SK-N-SH (cell line): ENCODE measurements at regions of chr20 and their contacts with region 1.

Region 1: DNA sequence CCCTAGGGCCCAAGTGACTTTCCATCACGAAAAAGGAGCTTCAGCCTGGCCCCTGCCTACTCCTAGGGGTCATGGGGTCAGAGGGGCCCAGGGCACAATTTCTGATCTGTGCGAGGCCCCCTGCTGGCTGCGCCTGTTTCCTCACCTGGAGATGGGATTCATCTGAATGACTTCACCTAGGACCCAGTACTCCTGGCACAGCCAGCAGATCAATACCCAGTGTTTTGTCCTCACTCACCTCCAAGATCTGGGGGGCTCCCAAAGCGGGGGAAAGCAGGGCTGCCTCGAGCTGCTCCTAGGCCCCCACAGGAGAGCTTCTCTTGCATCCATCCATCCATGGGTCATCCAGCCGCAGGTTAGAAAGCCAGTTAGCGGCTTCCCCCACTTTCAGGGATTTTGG is 33.8 kb downstream of the CD40 start:
- DNase-seq: peak; percentile 67
- H3K4me3 ChIP-seq: no peak overlapping the region; a peak in 1 of 4 replicates
- H3K27ac ChIP-seq: no peak overlapping the region
- H3K4me1 ChIP-seq: peaks cover 0 to 49% of the 10 kb centered on the region in 2 experiments; a peak in 2 of 4 replicates
- H3K27me3 ChIP-seq: no peaks in the 10 kb centered on the region; the same call in 1 of the 2 replicates
- CTCF ChIP-seq: peak; percentile 56
- EP300 ChIP-seq: no peak
- RAD21 ChIP-seq: no peak

Region 2: DNA sequence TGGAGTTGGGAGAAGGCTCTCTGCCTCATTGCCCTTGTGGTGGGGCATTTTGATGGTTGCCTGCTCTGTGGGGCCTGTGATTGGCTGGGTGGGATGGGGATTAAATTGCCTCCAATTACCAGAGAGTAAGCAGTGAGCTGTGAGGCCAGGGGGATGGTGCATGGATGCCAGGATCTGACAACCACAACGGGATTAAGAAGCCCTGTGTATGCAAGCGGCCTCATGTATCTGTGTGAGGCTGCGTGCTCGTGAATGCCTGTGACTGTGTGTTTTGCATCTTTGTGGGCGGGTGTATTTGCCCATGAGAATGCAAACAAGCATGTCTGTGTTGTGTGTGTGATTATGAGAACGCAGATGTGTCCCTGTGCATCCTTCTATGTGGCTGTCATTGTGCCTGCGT is 12.3 kb after region 1 on chr20:
- CTCF ChIA-PET with region 1: interaction called, 81 read pairs
- POLR2A ChIA-PET with region 1: no interaction called
- DNase-seq: no peak
- H3K4me3 ChIP-seq: no peak overlapping the region
- H3K27ac ChIP-seq: no peak overlapping the region
- H3K4me1 ChIP-seq: peaks cover 0 to 29% of the 10 kb centered on the region in 2 experiments; a peak in 2 of 4 replicates
- H3K27me3 ChIP-seq: no peaks in the 10 kb centered on the region
- CTCF ChIP-seq: no peak
- EP300 ChIP-seq: no peak
- RAD21 ChIP-seq: no peak

Region 3: GRCh38 chr20:46169245-46170171 is 17.6 kb after region 1 on chr20:
- CTCF ChIA-PET with region 1: interaction called, 81 read pairs
- POLR2A ChIA-PET with region 1: no interaction called
- DNase-seq: peak; percentile 62
- H3K4me3 ChIP-seq: no peak overlapping the region
- H3K27ac ChIP-seq: peak overlapping the region in 1 of 2 experiments; percentile 82; a peak in 2 of 4 replicates
- H3K4me1 ChIP-seq: peaks cover 0 to 28% of the 10 kb centered on the region in 2 experiments; a peak in 2 of 4 replicates
- H3K27me3 ChIP-seq: peaks cover 21% of the 10 kb centered on the region; the same call in 1 of the 2 replicates
- CTCF ChIP-seq: no peak
- EP300 ChIP-seq: peak in 1 of 2 experiments; percentile 67; a peak in 1 of 4 replicates
- RAD21 ChIP-seq: no peak

Region 4: GRCh38 chr20:46242390-46242789 is 90.5 kb after region 1 on chr20:
- CTCF ChIA-PET with region 1: no interaction called
- POLR2A ChIA-PET with region 1: no interaction called
- DNase-seq: no peak
- H3K4me3 ChIP-seq: no peak overlapping the region
- H3K27ac ChIP-seq: no peak overlapping the region
- H3K4me1 ChIP-seq: no peaks in the 10 kb centered on the region; a peak in 1 of 4 replicates
- H3K27me3 ChIP-seq: no peaks in the 10 kb centered on the region
- CTCF ChIP-seq: no peak
- EP300 ChIP-seq: no peak
- RAD21 ChIP-seq: no peak